ENCODE measurements at regions of chr12 and their contacts with region 1.

Region 1: GRCh38 chr12:120086801-120087621 is 29.5 kb downstream of the RAB35 start:
- DNase-seq: peak; percentile 99 to 100 (median 100)
- H3K4me3 ChIP-seq: peak overlapping the region; percentile 49 to 52
- H3K4me3 Mint-ChIP-seq: peak overlapping the region; percentile 69 to 86 (median 83)
- H3K27ac ChIP-seq: peak overlapping the region; percentile 58
- H3K27ac Mint-ChIP-seq: peak overlapping the region; percentile 92 to 95 (median 93)
- H3K4me1 ChIP-seq: peaks cover 12% of the 10 kb centered on the region
- H3K4me1 Mint-ChIP-seq: peaks cover 7 to 26% (median 18%) of the 10 kb centered on the region in 4 donors
- H3K27me3 ChIP-seq: no peaks in the 10 kb centered on the region
- H3K27me3 Mint-ChIP-seq: no peaks in the 10 kb centered on the region

Region 2: GRCh38 chr12:119667577-119668323 is 419.3 kb before region 1 on chr12 and contains the start of gene PRKAB1:
- CTCF ChIA-PET with region 1: no interaction called
- POLR2A ChIA-PET with region 1: no interaction called
- intact Hi-C with region 1: loop called (anchors 5 kb)
- DNase-seq: peak; percentile 94 to 97 (median 96)
- H3K4me3 ChIP-seq: peak within 1 kb of the TSS; percentile 67 to 98
- H3K4me3 Mint-ChIP-seq: peak within 1 kb of the TSS; percentile 88 to 93 (median 90)
- H3K27ac ChIP-seq: peak within 1 kb of the TSS; percentile 78
- H3K27ac Mint-ChIP-seq: peak within 1 kb of the TSS; percentile 88 to 95 (median 93)
- H3K4me1 ChIP-seq: peaks cover 53% of the 10 kb centered on the region
- H3K4me1 Mint-ChIP-seq: peaks cover 30 to 67% (median 47%) of the 10 kb centered on the region in 4 donors
- H3K27me3 ChIP-seq: no peaks in the 10 kb centered on the region
- H3K27me3 Mint-ChIP-seq: no peaks in the 10 kb centered on the region
- total RNA-seq, gene PRKAB1: 43.4 to 47.6 TPM

Region 3: GRCh38 chr12:119931402-119931801 is 155.6 kb before region 1 on chr12:
- CTCF ChIA-PET with region 1: interaction called, 4 read pairs
- POLR2A ChIA-PET with region 1: no interaction called
- intact Hi-C with region 1: loop called (anchors 1 kb)
- DNase-seq: no peak
- H3K4me3 ChIP-seq: no peak overlapping the region
- H3K4me3 Mint-ChIP-seq: no peak overlapping the region
- H3K27ac ChIP-seq: no peak overlapping the region
- H3K27ac Mint-ChIP-seq: no peak overlapping the region
- H3K4me1 ChIP-seq: no peaks in the 10 kb centered on the region
- H3K4me1 Mint-ChIP-seq: no peaks in the 10 kb centered on the region
- H3K27me3 ChIP-seq: no peaks in the 10 kb centered on the region
- H3K27me3 Mint-ChIP-seq: peaks cover 2 to 3% of the 10 kb centered on the region in 2 donors

Region 4: GRCh38 chr12:119988782-119989668 is 98.0 kb before region 1 on chr12 and contains the start of gene BICDL1:
- CTCF ChIA-PET with region 1: interaction called, 22 read pairs
- POLR2A ChIA-PET with region 1: interaction called, 84 read pairs
- intact Hi-C with region 1: loop called (anchors 1 kb)
- DNase-seq: peak; percentile 98 to 99 (median 99)
- H3K4me3 ChIP-seq: peak within 1 kb of the TSS; percentile 60 to 78
- H3K4me3 Mint-ChIP-seq: peak within 1 kb of the TSS; percentile 85 to 95 (median 87)
- H3K27ac ChIP-seq: peak within 1 kb of the TSS; percentile 77
- H3K27ac Mint-ChIP-seq: peak within 1 kb of the TSS; percentile 95 to 99 (median 98)
- H3K4me1 ChIP-seq: peaks cover 36% of the 10 kb centered on the region
- H3K4me1 Mint-ChIP-seq: peaks cover 26 to 41% (median 32%) of the 10 kb centered on the region in 4 donors
- H3K27me3 ChIP-seq: no peaks in the 10 kb centered on the region
- H3K27me3 Mint-ChIP-seq: no peaks in the 10 kb centered on the region
- total RNA-seq, gene BICDL1: 143 to 153 TPM

Region 5: GRCh38 chr12:120110550-120111501 is 23.8 kb after region 1 on chr12:
- CTCF ChIA-PET with region 1: interaction called, 11 read pairs
- POLR2A ChIA-PET with region 1: interaction called, 20 read pairs
- intact Hi-C with region 1: loop called (anchors 1 kb)
- DNase-seq: peak; percentile 49 to 70 (median 61)
- H3K4me3 ChIP-seq: peak overlapping the region in 1 of 2 donors; percentile 45
- H3K4me3 Mint-ChIP-seq: peak overlapping the region; percentile 33 to 85 (median 80)
- H3K27ac ChIP-seq: peak overlapping the region; percentile 56
- H3K27ac Mint-ChIP-seq: peak overlapping the region; percentile 69 to 94 (median 78)
- H3K4me1 ChIP-seq: peaks cover 76% of the 10 kb centered on the region
- H3K4me1 Mint-ChIP-seq: peaks cover 52 to 87% (median 67%) of the 10 kb centered on the region in 4 donors
- H3K27me3 ChIP-seq: no peaks in the 10 kb centered on the region
- H3K27me3 Mint-ChIP-seq: no peaks in the 10 kb centered on the region